ENCODE measurements at regions of chr7 and their contacts with region 1.

Region 1: GRCh38 chr7:158722574-158723237 is 18.1 kb upstream of the NCAPG2 start:
- DNase-seq: no peak
- ATAC-seq: no peak
- H3K4me3 ChIP-seq: no peak overlapping the region
- H3K4me3 Mint-ChIP-seq: no peak overlapping the region
- H3K27ac ChIP-seq: no peak overlapping the region
- H3K27ac Mint-ChIP-seq: no peak overlapping the region
- H3K4me1 ChIP-seq: no peaks in the 10 kb centered on the region
- H3K4me1 Mint-ChIP-seq: no peaks in the 10 kb centered on the region
- H3K27me3 ChIP-seq: peaks cover 0 to under 1% of the 10 kb centered on the region in 2 experiments
- H3K27me3 Mint-ChIP-seq: peaks cover 3% of the 10 kb centered on the region
- CTCF ChIP-seq: no peak

Region 2: GRCh38 chr7:158204453-158204852 is 518.3 kb before region 1 on chr7:
- CTCF ChIA-PET with region 1: no interaction called
- POLR2A ChIA-PET with region 1: no interaction called
- intact Hi-C with region 1: no loop called
- DNase-seq: no peak
- ATAC-seq: no peak
- H3K4me3 ChIP-seq: no peak overlapping the region
- H3K4me3 Mint-ChIP-seq: no peak overlapping the region
- H3K27ac ChIP-seq: no peak overlapping the region
- H3K27ac Mint-ChIP-seq: no peak overlapping the region
- H3K4me1 ChIP-seq: no peaks in the 10 kb centered on the region
- H3K4me1 Mint-ChIP-seq: no peaks in the 10 kb centered on the region
- H3K27me3 ChIP-seq: no peaks in the 10 kb centered on the region
- H3K27me3 Mint-ChIP-seq: peaks cover 26% of the 10 kb centered on the region
- CTCF ChIP-seq: no peak

Region 3: DNA sequence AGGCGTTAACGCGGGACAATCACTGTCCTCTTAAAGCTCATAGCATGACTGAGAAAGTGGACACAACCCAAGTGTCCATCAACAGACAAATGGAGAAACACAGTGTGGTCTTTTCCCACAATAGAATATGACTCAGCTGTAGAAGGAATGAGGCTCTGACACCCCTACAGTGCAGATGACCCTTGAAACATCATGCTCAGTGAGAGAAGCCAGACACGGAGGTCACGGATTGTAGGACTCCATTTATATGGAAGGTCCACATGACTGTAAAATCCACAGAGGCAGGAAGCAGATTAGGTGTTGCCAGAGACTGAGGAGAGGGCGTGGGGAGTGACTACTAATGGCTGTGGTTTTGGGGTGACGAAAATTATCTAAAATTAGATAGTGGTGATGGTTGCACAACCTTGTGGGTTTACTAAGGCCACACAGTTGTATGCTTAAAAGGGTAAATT is 12.0 kb before region 1 on chr7:
- CTCF ChIA-PET with region 1: interaction called, 3 read pairs
- POLR2A ChIA-PET with region 1: no interaction called
- intact Hi-C with region 1: loop called in 1 of 2 experiments (anchors 1 kb)
- DNase-seq: peak in 3 of 9 experiments; percentile 21 to 71 (median 54)
- ATAC-seq: peak; percentile 52
- H3K4me3 ChIP-seq: no peak overlapping the region
- H3K4me3 Mint-ChIP-seq: no peak overlapping the region
- H3K27ac ChIP-seq: no peak overlapping the region
- H3K27ac Mint-ChIP-seq: peak overlapping the region; percentile 27
- H3K4me1 ChIP-seq: no peaks in the 10 kb centered on the region
- H3K4me1 Mint-ChIP-seq: peaks cover 14% of the 10 kb centered on the region
- H3K27me3 ChIP-seq: no peaks in the 10 kb centered on the region
- H3K27me3 Mint-ChIP-seq: peaks cover 7% of the 10 kb centered on the region
- CTCF ChIP-seq: no peak